Colonic mucosa (tissue), 4 donors: ENCODE measurements at regions of chr6 and their contacts with region 1.

Region 1: DNA sequence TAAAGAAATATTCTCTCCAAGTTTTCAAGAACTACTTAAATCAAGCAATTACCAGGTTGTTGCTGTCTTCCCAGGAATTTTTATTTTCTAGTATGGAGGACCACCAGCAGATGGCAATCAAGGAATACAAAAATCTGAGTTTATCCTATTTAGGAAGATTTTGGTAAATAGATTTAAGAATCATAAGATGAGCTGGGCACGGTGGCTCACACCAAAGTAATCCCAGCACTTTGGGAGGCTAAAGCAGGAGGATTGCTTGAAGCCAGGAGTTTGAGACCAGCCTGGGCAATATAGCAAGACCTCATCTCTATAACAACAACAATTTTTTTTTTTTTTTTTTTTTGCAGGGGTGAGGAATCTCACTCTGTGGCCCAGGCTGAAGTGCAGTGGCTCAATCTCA is 19.3 kb upstream of the SEC63 start:
- DNase-seq: no peak
- H3K4me3 ChIP-seq: no peak overlapping the region
- H3K27ac ChIP-seq: no peak overlapping the region
- H3K4me1 ChIP-seq: no peaks in the 10 kb centered on the region
- H3K27me3 ChIP-seq: no peaks in the 10 kb centered on the region
- CTCF ChIP-seq: no peak

Region 2: GRCh38 chr6:107691062-107691751 is 286.1 kb before region 1 on chr6:
- intact Hi-C with region 1: no loop called
- DNase-seq: no peak
- H3K4me3 ChIP-seq: no peak overlapping the region
- H3K27ac ChIP-seq: no peak overlapping the region
- H3K4me1 ChIP-seq: no peaks in the 10 kb centered on the region
- H3K27me3 ChIP-seq: no peaks in the 10 kb centered on the region
- CTCF ChIP-seq: no peak

Region 3: GRCh38 chr6:107877968-107878367 is 99.3 kb before region 1 on chr6:
- intact Hi-C with region 1: no loop called
- DNase-seq: no peak
- H3K4me3 ChIP-seq: no peak overlapping the region
- H3K27ac ChIP-seq: no peak overlapping the region
- H3K4me1 ChIP-seq: no peaks in the 10 kb centered on the region
- H3K27me3 ChIP-seq: no peaks in the 10 kb centered on the region
- CTCF ChIP-seq: no peak

Region 4: DNA sequence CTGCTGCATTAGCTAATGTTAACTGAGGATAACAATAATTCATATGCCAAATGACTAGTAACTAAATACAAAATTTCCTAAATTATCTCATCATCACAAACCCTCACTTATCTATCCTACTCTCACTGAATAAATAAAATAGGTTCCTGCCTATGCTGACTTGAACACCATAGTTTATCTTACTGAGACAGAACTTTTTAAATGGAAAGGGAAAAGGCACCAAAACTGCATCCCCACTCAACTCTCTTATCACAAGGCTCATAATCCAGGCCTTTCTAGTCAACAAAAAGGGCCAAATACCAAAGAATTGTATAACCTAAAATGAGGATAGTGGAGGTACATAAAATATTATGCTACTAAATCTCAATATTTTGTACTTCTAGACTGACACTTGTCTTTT is 74.2 kb after region 1 on chr6:
- intact Hi-C with region 1: loop called (anchors 2 kb)
- DNase-seq: no peak
- H3K4me3 ChIP-seq: no peak overlapping the region
- H3K27ac ChIP-seq: no peak overlapping the region
- H3K4me1 ChIP-seq: no peaks in the 10 kb centered on the region
- H3K27me3 ChIP-seq: no peaks in the 10 kb centered on the region
- CTCF ChIP-seq: no peak

Region 5: GRCh38 chr6:108250240-108250866 is 273.1 kb after region 1 on chr6:
- intact Hi-C with region 1: no loop called
- DNase-seq: no peak
- H3K4me3 ChIP-seq: no peak overlapping the region
- H3K27ac ChIP-seq: no peak overlapping the region
- H3K4me1 ChIP-seq: no peaks in the 10 kb centered on the region
- H3K27me3 ChIP-seq: no peaks in the 10 kb centered on the region
- CTCF ChIP-seq: no peak

Region 6: GRCh38 chr6:108526739-108527174 is 549.5 kb after region 1 on chr6:
- intact Hi-C with region 1: loop called (anchors 10 kb)
- DNase-seq: no peak
- H3K4me3 ChIP-seq: no peak overlapping the region
- H3K27ac ChIP-seq: no peak overlapping the region
- H3K4me1 ChIP-seq: no peaks in the 10 kb centered on the region
- H3K27me3 ChIP-seq: no peaks in the 10 kb centered on the region
- CTCF ChIP-seq: peak; percentile 62